ENCODE measurements at regions of chr13 and their contacts with region 1.

Region 1: GRCh38 chr13:110396913-110397381 is 89.9 kb downstream of the COL4A2 start:
- DNase-seq: peak; percentile 97
- H3K4me3 Mint-ChIP-seq: peak overlapping the region; percentile 72
- H3K27ac Mint-ChIP-seq: peak overlapping the region; percentile 98
- H3K4me1 Mint-ChIP-seq: peaks cover 32% of the 10 kb centered on the region
- H3K27me3 Mint-ChIP-seq: no peaks in the 10 kb centered on the region
- CTCF ChIP-seq: no peak

Region 2: DNA sequence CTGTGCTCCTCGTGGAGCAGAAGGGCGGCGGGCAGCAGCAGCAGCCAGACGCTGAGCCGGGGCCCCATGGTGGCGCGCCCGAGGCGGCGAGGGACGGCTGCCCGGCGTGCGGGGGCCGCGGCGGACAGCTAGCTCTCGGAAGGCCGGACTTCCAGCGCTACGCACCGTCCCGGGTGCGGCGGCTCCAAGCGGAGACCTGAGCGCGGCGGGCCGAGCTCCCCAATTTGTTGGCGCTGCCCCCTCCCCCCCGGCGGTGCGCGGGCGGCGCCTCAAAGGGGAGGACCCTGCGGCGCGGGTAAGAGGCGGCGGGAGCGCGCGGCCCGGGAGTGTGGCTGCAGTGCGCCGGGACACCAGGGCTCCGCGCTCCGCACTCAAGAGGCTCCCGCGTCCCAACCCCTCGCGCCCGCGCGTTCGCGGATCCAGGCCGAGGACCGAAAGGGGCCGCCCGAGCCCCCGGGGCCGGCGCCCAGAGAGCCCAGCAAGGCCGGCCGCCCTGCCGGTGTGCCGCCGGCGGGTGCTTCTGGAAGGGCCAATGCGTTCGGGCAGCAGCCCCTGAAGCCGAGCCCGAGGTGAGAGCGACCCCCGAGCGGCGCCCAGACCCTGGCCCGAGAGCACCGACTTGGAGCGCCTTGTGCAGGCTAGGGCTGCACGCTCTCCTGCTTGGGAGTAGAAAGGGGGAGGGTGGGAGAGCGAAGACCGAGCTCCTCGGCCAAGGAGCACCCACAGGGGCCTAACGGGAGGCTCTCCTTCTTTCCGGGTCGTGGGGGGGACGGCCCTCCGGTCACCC is 89.8 kb before region 1 on chr13 and contains the starts of genes COL4A1 and COL4A2:
- CTCF ChIA-PET with region 1: no interaction called
- POLR2A ChIA-PET with region 1: interaction called, 5 read pairs
- intact Hi-C with region 1: loop called (anchors 1 kb)
- DNase-seq: peak; percentile 77
- H3K4me3 Mint-ChIP-seq: peak within 1 kb of the TSS; percentile 90
- H3K27ac Mint-ChIP-seq: peak within 1 kb of the TSS; percentile 5
- H3K4me1 Mint-ChIP-seq: peaks cover 32% of the 10 kb centered on the region
- H3K27me3 Mint-ChIP-seq: no peaks in the 10 kb centered on the region
- CTCF ChIP-seq: no peak
- total RNA-seq, gene COL4A1: 25.9 and 42.1 TPM in 2 replicates
- total RNA-seq, gene COL4A2: 54.6 and 66.0 TPM in 2 replicates

Region 3: GRCh38 chr13:110319774-110320509 is 77.0 kb before region 1 on chr13:
- CTCF ChIA-PET with region 1: no interaction called
- POLR2A ChIA-PET with region 1: no interaction called
- intact Hi-C with region 1: loop called (anchors 2 kb)
- DNase-seq: peak; percentile 83
- H3K4me3 Mint-ChIP-seq: peak overlapping the region; percentile 68
- H3K27ac Mint-ChIP-seq: peak overlapping the region; percentile 95
- H3K4me1 Mint-ChIP-seq: peaks cover 20% of the 10 kb centered on the region
- H3K27me3 Mint-ChIP-seq: no peaks in the 10 kb centered on the region
- CTCF ChIP-seq: no peak

Region 4: DNA sequence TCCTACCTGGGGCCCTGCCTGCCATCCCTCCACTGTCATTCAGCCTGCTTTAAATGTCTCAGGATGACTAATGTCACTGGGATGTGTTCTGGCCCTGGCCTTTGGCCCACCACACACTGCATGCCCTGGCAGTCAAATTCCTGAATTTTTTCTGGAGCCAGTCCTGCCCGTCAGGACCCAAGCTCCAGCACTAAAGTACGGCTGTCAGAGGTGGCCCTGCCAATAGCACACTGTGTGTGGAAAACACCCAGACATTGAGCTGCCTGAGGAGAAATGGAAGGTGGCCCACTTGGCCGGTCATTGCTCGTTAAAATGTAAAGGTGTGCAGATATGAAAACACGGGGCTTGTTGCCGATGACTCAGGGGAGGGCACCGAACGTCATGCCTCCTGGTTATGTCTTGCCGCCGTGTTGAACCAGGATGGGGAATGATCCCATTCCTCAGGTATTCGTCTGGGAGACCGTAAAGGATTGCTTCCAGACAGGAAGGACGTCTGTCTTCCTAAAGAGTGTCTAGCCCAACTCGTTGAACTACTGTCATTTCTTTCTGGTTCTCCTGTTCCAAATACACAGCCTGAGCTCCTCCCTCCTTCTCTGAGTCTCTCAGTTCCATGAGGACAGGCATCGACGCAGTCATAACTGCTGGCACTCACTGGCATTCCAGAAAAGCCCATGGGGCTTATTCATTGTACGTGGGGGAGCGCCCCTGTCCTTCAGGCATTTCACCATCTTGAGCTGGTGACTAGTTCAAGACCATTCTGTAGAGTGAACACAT is 49.2 kb before region 1 on chr13:
- CTCF ChIA-PET with region 1: no interaction called
- POLR2A ChIA-PET with region 1: no interaction called
- intact Hi-C with region 1: loop called (anchors 1 kb)
- DNase-seq: peak; percentile 92
- H3K4me3 Mint-ChIP-seq: peak overlapping the region; percentile 72
- H3K27ac Mint-ChIP-seq: peak overlapping the region; percentile 95
- H3K4me1 Mint-ChIP-seq: peaks cover 62% of the 10 kb centered on the region
- H3K27me3 Mint-ChIP-seq: no peaks in the 10 kb centered on the region
- CTCF ChIP-seq: no peak

Region 5: DNA sequence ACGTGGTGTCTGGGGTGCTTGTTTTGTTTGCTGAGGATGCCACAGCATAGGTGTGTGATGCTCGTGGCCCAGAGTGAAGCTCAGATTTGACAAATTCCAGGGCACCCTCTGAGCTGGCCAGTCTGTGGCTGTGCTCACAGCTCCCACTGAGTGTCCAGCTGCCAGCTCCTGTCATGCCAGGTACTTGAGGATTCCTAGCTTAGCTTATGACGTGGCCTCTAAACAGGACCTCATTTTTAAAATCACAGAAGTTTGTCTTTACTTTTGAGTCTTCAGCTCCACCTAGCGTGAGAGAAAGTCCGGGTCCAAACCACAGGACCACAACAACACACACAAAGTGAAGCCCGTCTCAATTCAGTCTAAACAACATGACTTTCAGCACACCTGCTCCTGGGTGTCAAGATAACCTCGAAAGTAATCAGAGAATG is 47.3 kb after region 1 on chr13:
- CTCF ChIA-PET with region 1: no interaction called
- POLR2A ChIA-PET with region 1: no interaction called
- intact Hi-C with region 1: loop called (anchors 1 kb)
- DNase-seq: peak; percentile 29
- H3K4me3 Mint-ChIP-seq: no peak overlapping the region
- H3K27ac Mint-ChIP-seq: no peak overlapping the region
- H3K4me1 Mint-ChIP-seq: peaks cover 48% of the 10 kb centered on the region
- H3K27me3 Mint-ChIP-seq: no peaks in the 10 kb centered on the region
- CTCF ChIP-seq: peak; percentile 37